Activated CD4-positive, alpha-beta T cell treated with anti-CD3 and anti-CD28 coated beads for 36 hours (primary cell): ENCODE measurements at regions of chr11 and their contacts with region 1.

Region 1: GRCh38 chr11:112113539-112114457 is 27.1 kb downstream of the SDHD start:
- DNase-seq: no peak
- ATAC-seq: peak; percentile 68
- H3K4me3 Mint-ChIP-seq: no peak overlapping the region
- H3K27ac Mint-ChIP-seq: no peak overlapping the region
- H3K4me1 Mint-ChIP-seq: peaks cover 7% of the 10 kb centered on the region
- H3K27me3 Mint-ChIP-seq: no peaks in the 10 kb centered on the region

Region 2: GRCh38 chr11:111642542-111642941 is 471.3 kb before region 1 on chr11:
- CTCF ChIA-PET with region 1: no interaction called
- POLR2A ChIA-PET with region 1: no interaction called
- intact Hi-C with region 1: no loop called
- DNase-seq: no peak
- ATAC-seq: no peak
- H3K4me3 Mint-ChIP-seq: no peak overlapping the region
- H3K27ac Mint-ChIP-seq: no peak overlapping the region
- H3K4me1 Mint-ChIP-seq: peaks cover 11% of the 10 kb centered on the region
- H3K27me3 Mint-ChIP-seq: no peaks in the 10 kb centered on the region

Region 3: GRCh38 chr11:111819161-111819828 is 294.5 kb before region 1 on chr11:
- CTCF ChIA-PET with region 1: no interaction called
- POLR2A ChIA-PET with region 1: no interaction called
- intact Hi-C with region 1: no loop called
- DNase-seq: no peak
- ATAC-seq: no peak
- H3K4me3 Mint-ChIP-seq: no peak overlapping the region
- H3K27ac Mint-ChIP-seq: no peak overlapping the region
- H3K4me1 Mint-ChIP-seq: peaks cover 3% of the 10 kb centered on the region
- H3K27me3 Mint-ChIP-seq: no peaks in the 10 kb centered on the region

Region 4: GRCh38 chr11:112103446-112103845 is 10.4 kb before region 1 on chr11:
- CTCF ChIA-PET with region 1: interaction called, 23 read pairs
- POLR2A ChIA-PET with region 1: no interaction called
- intact Hi-C with region 1: no loop called
- DNase-seq: no peak
- ATAC-seq: no peak
- H3K4me3 Mint-ChIP-seq: no peak overlapping the region
- H3K27ac Mint-ChIP-seq: no peak overlapping the region
- H3K4me1 Mint-ChIP-seq: peaks cover 3% of the 10 kb centered on the region
- H3K27me3 Mint-ChIP-seq: no peaks in the 10 kb centered on the region

Region 5: DNA sequence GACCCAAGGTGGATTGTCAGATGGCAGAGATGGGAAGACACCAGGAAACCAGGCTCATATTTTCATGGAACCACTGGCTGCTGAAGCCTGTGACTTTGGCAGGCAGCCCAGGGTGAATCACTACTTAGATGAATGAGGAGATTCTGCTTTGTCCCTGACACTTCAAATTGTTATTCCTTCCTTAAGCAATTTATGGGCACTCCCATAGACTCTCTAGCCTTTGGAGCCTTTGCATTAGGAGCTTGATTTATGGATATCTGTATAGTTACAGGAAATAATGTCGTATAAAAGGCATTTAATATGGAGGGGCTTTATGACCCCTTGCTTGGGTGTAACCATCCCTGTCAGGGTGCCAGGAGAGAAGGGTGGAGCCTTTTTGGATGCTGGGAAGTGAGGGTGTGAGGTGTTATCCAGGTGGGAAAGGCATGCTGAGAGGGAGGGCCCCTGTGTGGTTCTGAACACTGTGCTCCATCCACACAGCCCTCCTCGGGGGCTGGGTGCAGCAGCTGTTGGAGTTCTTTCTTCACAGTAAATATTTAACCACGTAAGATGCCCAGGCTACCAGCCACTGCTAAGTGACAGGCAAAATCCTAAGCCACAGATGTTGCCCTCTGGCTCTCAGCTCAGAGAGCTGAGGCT is 14.8 kb after region 1 on chr11:
- CTCF ChIA-PET with region 1: interaction called, 15 read pairs
- POLR2A ChIA-PET with region 1: no interaction called
- intact Hi-C with region 1: no loop called
- DNase-seq: no peak
- ATAC-seq: no peak
- H3K4me3 Mint-ChIP-seq: no peak overlapping the region
- H3K27ac Mint-ChIP-seq: no peak overlapping the region
- H3K4me1 Mint-ChIP-seq: peaks cover 3% of the 10 kb centered on the region
- H3K27me3 Mint-ChIP-seq: no peaks in the 10 kb centered on the region

Region 6: DNA sequence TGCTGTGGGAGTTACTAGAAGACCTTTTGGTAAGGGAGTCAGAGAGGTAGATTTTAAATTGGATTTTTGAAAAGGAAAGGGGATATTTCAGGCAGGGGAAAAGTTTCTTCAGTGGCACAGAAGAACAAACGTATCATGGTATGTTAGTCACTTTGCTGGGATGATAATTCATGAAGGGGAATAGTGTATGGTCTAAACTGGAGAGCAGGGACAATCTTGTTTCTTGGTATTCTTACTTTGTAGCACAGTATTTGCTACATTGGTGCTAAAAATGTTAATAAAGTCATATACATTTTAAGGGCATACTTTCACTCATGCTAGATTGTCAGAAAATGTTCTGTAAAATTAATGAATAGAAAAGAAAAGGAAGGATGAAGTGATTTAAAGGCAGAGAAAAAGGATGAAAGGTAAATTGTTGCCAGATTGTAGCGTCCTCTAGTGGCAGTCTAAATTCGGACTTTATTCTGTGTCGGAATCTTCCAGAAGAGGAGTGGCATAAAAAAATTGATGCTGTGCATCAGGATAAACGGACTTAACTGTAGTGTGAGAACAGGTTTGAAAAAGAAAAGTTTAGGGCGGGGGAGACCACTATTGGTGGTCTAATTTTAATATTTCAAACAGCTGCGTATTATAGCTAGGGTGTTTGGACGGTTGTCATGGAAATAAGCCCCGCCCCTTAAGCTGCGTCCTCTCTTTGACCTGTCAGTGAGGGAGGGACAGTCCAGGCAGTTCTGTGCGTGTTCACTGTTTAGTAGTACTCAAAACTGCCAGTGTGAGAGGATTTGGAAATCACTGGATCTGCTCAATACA is 61.2 kb after region 1 on chr11 and contains the start of gene BCO2:
- CTCF ChIA-PET with region 1: interaction called, 11 read pairs
- POLR2A ChIA-PET with region 1: no interaction called
- intact Hi-C with region 1: loop called (anchors 1 kb)
- DNase-seq: peak; percentile 70
- ATAC-seq: peak; percentile 81
- H3K4me3 Mint-ChIP-seq: peak within 1 kb of the TSS; percentile 54
- H3K27ac Mint-ChIP-seq: no peak within 1 kb of the TSS
- H3K4me1 Mint-ChIP-seq: peaks cover 11% of the 10 kb centered on the region
- H3K27me3 Mint-ChIP-seq: peaks cover 22% of the 10 kb centered on the region
- total RNA-seq, gene BCO2: 0.63 to 0.75 TPM